ENCODE measurements at regions of chr10 and their contacts with region 1.

Region 1: GRCh38 chr10:98748298-98748697 is 301.6 kb upstream of the HPS1 start:
- DNase-seq: peak in 1 of 2 experiments; percentile 35
- H3K4me3 ChIP-seq: no peak overlapping the region
- H3K4me3 Mint-ChIP-seq: no peak overlapping the region
- H3K27ac Mint-ChIP-seq: no peak overlapping the region
- H3K4me1 ChIP-seq: no peaks in the 10 kb centered on the region
- H3K4me1 Mint-ChIP-seq: no peaks in the 10 kb centered on the region
- H3K27me3 ChIP-seq: no peaks in the 10 kb centered on the region
- H3K27me3 Mint-ChIP-seq: no peaks in the 10 kb centered on the region
- CTCF ChIP-seq: peak; percentile 34 to 35

Region 2: DNA sequence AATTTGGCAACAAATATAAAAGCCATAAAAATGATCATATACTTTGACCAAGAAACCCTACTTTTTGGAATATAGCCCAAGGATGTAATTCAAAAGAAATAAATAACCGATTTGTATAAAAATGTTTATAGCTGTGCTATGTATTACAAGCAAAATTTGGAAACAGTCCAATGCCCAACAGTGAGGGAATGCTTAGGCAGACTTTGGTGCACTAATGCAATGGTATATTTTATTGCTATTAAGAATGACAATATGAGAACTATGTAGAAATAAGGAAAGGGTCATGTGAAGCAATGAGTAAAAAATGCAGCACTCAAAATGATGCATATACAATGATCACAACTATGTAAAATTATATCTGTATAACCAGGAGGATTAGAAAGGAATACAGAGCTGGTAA is 27.7 kb before region 1 on chr10:
- CTCF ChIA-PET with region 1: no interaction called
- POLR2A ChIA-PET with region 1: no interaction called
- intact Hi-C with region 1: no loop called
- DNase-seq: no peak
- H3K4me3 ChIP-seq: no peak overlapping the region
- H3K4me3 Mint-ChIP-seq: no peak overlapping the region
- H3K27ac Mint-ChIP-seq: no peak overlapping the region
- H3K4me1 ChIP-seq: no peaks in the 10 kb centered on the region
- H3K4me1 Mint-ChIP-seq: no peaks in the 10 kb centered on the region
- H3K27me3 ChIP-seq: no peaks in the 10 kb centered on the region
- H3K27me3 Mint-ChIP-seq: peaks cover 12% of the 10 kb centered on the region
- CTCF ChIP-seq: no peak

Region 3: GRCh38 chr10:99042051-99042771 is 293.9 kb after region 1 on chr10:
- CTCF ChIA-PET with region 1: no interaction called
- POLR2A ChIA-PET with region 1: no interaction called
- intact Hi-C with region 1: loop called (anchors 5 kb)
- DNase-seq: no peak
- H3K4me3 ChIP-seq: no peak overlapping the region
- H3K4me3 Mint-ChIP-seq: no peak overlapping the region
- H3K27ac Mint-ChIP-seq: no peak overlapping the region
- H3K4me1 ChIP-seq: no peaks in the 10 kb centered on the region
- H3K4me1 Mint-ChIP-seq: no peaks in the 10 kb centered on the region
- H3K27me3 ChIP-seq: no peaks in the 10 kb centered on the region
- H3K27me3 Mint-ChIP-seq: no peaks in the 10 kb centered on the region
- CTCF ChIP-seq: no peak

Region 4: DNA sequence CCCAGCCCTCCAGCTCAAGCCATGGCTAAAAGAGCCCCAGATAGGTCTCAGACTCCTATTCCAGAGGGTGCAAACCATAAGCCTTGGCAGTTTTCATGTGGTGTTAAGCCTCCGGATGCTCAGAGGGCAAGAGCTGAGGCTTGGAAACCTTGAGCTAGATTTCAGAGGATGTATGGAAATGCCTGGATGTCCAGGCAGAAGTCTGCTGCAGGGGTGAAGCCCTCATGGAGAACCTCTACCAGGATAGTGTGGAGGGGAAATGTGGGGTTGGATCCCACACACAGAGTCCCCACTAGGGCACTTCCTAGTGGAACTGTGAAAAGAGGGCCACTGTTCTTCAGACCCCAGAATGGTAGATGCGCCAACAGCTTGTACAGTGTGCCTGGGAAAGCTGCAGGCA is 500.5 kb after region 1 on chr10:
- CTCF ChIA-PET with region 1: no interaction called
- POLR2A ChIA-PET with region 1: no interaction called
- intact Hi-C with region 1: loop called (anchors 1 kb)
- DNase-seq: no peak
- H3K4me3 ChIP-seq: no peak overlapping the region
- H3K4me3 Mint-ChIP-seq: no peak overlapping the region
- H3K27ac Mint-ChIP-seq: no peak overlapping the region
- H3K4me1 ChIP-seq: no peaks in the 10 kb centered on the region
- H3K4me1 Mint-ChIP-seq: no peaks in the 10 kb centered on the region
- H3K27me3 ChIP-seq: no peaks in the 10 kb centered on the region
- H3K27me3 Mint-ChIP-seq: no peaks in the 10 kb centered on the region
- CTCF ChIP-seq: no peak